ENCODE measurements at regions of chr5 and their contacts with region 1.

Region 1: DNA sequence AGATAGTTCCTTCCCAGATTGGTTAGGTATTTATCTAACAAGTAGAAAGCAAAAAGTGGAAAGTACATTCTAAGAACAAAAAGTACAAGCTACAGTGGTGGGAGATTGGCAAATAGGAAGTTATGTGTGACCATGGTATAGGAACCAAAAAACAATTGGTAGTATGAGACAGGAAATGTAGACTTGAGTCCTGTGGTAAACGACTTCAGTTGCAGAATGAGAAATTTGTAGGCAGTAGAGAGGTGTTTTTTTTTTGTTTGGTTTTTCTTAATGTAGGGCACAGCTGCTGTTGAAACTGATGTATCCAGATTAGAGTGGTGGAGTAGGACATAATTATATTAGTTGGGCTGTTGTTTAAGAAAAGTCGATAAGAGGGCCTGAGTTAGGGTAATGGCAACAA is 72.0 kb downstream of the CCNH start:
- DNase-seq: no peak

Region 2: DNA sequence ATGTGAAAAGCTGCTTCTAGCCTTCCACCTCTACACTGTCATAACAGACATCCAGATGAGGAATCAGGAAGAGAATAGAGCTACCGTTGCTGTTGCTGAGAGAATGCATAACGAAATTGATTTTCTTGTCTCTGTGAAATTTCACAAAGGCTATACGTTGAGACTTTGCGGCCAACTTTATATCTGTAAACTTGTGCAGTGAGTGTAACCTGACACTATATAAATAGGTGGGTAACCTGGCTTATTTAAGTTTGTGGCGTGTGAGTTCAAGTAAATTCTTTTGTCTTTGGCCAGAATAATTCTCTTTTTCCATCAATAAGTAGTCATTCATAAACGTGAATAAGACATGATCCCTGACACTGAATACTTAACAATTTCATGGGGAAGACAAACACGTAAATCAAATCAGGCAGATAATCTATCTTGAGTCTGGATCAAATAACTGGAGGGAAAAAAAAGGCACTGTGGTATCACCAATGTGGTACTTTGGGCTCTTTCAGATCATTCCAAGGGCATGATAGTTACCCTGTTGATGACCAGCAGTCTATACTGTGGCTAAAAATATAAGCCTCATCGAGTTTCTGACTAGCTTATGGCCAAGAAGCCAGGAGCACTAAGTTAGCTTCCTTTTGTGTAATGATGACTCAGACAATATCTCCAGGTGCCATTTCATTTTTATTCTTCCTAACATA is 171.3 kb before region 1 on chr5:
- intact Hi-C with region 1: no loop called
- DNase-seq: no peak

Region 3: GRCh38 chr5:87322377-87322776 is 18.3 kb before region 1 on chr5:
- intact Hi-C with region 1: loop called in 1 of 2 experiments (anchors 2 kb)
- DNase-seq: no peak

Region 4: GRCh38 chr5:87421307-87421706 is 80.6 kb after region 1 on chr5:
- intact Hi-C with region 1: loop called in 1 of 2 experiments (anchors 2 kb)
- DNase-seq: no peak